HCT116 (cell line): ENCODE measurements at regions of chr11 and their contacts with region 1.

Region 1: GRCh38 chr11:13465909-13466371 is 2.9 kb upstream of the BTBD10 start:
- DNase-seq: peak; percentile 70
- ATAC-seq: 0 out of 2 replicates have a peak, but pooled peaks have one; percentile 16
- H3K4me3 ChIP-seq: no peak overlapping the region
- H3K27ac ChIP-seq: no peak overlapping the region
- H3K4me1 ChIP-seq: peaks cover 10 to 21% of the 10 kb centered on the region in 2 experiments
- H3K27me3 ChIP-seq: no peaks in the 10 kb centered on the region
- CTCF ChIP-seq: peak; percentile 37 to 62 (median 46); a peak in 5 of 6 replicates
- POLR2A ChIP-seq: no peak
- RAD21 ChIP-seq: peak; percentile 53

Region 2: GRCh38 chr11:13480195-13480594 is 14.3 kb after region 1 on chr11:
- CTCF ChIA-PET with region 1: interaction called, 10 read pairs
- POLR2A ChIA-PET with region 1: no interaction called
- RAD21 ChIA-PET with region 1: no interaction called
- intact Hi-C with region 1: no loop called
- DNase-seq: no peak
- ATAC-seq: peak; percentile 67; the same call in 1 of the 2 replicates
- H3K4me3 ChIP-seq: no peak overlapping the region
- H3K27ac ChIP-seq: no peak overlapping the region
- H3K4me1 ChIP-seq: no peaks in the 10 kb centered on the region; a peak in 1 of 4 replicates
- H3K27me3 ChIP-seq: no peaks in the 10 kb centered on the region
- CTCF ChIP-seq: no peak
- POLR2A ChIP-seq: no peak
- RAD21 ChIP-seq: no peak